A673 (cell line): ENCODE measurements at regions of chr1 and their contacts with region 1.

Region 1: DNA sequence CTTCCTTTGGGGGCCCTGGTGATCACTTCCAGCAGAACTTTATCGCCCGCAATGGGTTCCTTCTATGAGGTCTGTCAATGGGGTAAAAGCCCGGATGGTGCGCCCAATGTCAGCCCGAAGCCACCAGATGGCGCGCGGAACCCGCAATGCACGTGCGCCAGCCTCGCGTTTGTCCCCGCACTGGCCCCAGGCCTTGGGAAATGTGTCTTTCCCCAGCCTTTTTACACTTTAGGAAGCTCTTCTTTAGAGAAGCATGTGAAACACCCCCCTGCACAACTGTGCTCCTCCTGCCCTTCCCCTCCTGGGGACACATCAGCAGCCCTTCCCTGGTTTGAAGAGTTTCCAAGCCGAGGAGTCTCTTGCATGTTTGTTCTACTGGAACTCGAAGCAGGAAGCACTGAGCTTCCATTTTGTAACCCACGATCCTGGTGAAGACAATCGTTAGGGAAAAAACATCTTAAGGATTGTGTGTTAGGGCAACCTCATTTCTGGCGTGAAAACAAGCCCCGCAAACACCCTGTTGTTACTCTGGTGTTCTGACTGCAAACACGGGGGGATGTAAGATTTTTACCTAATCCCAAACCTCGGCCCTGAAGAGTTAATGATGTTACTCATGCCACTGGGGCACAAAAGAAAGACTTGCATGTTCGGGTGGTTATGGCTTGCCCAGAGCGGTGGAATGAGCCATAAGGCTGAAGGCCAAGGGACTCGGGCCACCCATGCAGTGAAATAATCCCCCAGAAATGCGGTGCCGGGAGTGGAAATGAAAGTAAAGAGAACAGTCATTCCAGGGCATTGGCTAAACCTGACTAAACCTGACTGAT is 20.4 kb upstream of the TARBP1 start:
- DNase-seq: peak; percentile 95
- H3K4me3 ChIP-seq: peak overlapping the region; percentile 1
- H3K27ac ChIP-seq: peak overlapping the region; percentile 83
- H3K4me1 ChIP-seq: peaks cover 41% of the 10 kb centered on the region
- H3K27me3 ChIP-seq: no peaks in the 10 kb centered on the region
- CTCF ChIP-seq: peak; percentile 96

Region 2: GRCh38 chr1:234553156-234553863 is 54.0 kb after region 1 on chr1:
- CTCF ChIA-PET with region 1: no interaction called
- POLR2A ChIA-PET with region 1: no interaction called
- intact Hi-C with region 1: no loop called
- DNase-seq: peak; percentile 50
- H3K4me3 ChIP-seq: no peak overlapping the region
- H3K27ac ChIP-seq: no peak overlapping the region
- H3K4me1 ChIP-seq: peaks cover 25% of the 10 kb centered on the region
- H3K27me3 ChIP-seq: no peaks in the 10 kb centered on the region
- CTCF ChIP-seq: no peak

Region 3: GRCh38 chr1:234599617-234600417 is 100.5 kb after region 1 on chr1:
- CTCF ChIA-PET with region 1: no interaction called
- POLR2A ChIA-PET with region 1: no interaction called
- intact Hi-C with region 1: loop called (anchors 2 kb)
- DNase-seq: peak; percentile 76
- H3K4me3 ChIP-seq: peak overlapping the region; percentile 54
- H3K27ac ChIP-seq: peak overlapping the region; percentile 86
- H3K4me1 ChIP-seq: peaks cover 57% of the 10 kb centered on the region
- H3K27me3 ChIP-seq: no peaks in the 10 kb centered on the region
- CTCF ChIP-seq: no peak

Region 4: GRCh38 chr1:234610348-234611152 is 111.2 kb after region 1 on chr1:
- CTCF ChIA-PET with region 1: interaction called, 13 read pairs
- POLR2A ChIA-PET with region 1: interaction called, 5 read pairs
- intact Hi-C with region 1: no loop called
- DNase-seq: peak; percentile 89
- H3K4me3 ChIP-seq: peak overlapping the region; percentile 43
- H3K27ac ChIP-seq: peak overlapping the region; percentile 98
- H3K4me1 ChIP-seq: peaks cover 35% of the 10 kb centered on the region
- H3K27me3 ChIP-seq: no peaks in the 10 kb centered on the region
- CTCF ChIP-seq: no peak

Region 5: GRCh38 chr1:234722904-234723720 is 223.8 kb after region 1 on chr1:
- CTCF ChIA-PET with region 1: no interaction called
- POLR2A ChIA-PET with region 1: no interaction called
- intact Hi-C with region 1: loop called (anchors 10 kb)
- DNase-seq: peak; percentile 44
- H3K4me3 ChIP-seq: peak overlapping the region; percentile 7
- H3K27ac ChIP-seq: peak overlapping the region; percentile 98
- H3K4me1 ChIP-seq: peaks cover 61% of the 10 kb centered on the region
- H3K27me3 ChIP-seq: no peaks in the 10 kb centered on the region
- CTCF ChIP-seq: no peak

Region 6: GRCh38 chr1:235077571-235078479 is 578.5 kb after region 1 on chr1:
- CTCF ChIA-PET with region 1: no interaction called
- POLR2A ChIA-PET with region 1: no interaction called
- intact Hi-C with region 1: loop called (anchors 1 kb)
- DNase-seq: no peak
- H3K4me3 ChIP-seq: no peak overlapping the region
- H3K27ac ChIP-seq: no peak overlapping the region
- H3K4me1 ChIP-seq: no peaks in the 10 kb centered on the region
- H3K27me3 ChIP-seq: no peaks in the 10 kb centered on the region
- CTCF ChIP-seq: no peak

Region 7: DNA sequence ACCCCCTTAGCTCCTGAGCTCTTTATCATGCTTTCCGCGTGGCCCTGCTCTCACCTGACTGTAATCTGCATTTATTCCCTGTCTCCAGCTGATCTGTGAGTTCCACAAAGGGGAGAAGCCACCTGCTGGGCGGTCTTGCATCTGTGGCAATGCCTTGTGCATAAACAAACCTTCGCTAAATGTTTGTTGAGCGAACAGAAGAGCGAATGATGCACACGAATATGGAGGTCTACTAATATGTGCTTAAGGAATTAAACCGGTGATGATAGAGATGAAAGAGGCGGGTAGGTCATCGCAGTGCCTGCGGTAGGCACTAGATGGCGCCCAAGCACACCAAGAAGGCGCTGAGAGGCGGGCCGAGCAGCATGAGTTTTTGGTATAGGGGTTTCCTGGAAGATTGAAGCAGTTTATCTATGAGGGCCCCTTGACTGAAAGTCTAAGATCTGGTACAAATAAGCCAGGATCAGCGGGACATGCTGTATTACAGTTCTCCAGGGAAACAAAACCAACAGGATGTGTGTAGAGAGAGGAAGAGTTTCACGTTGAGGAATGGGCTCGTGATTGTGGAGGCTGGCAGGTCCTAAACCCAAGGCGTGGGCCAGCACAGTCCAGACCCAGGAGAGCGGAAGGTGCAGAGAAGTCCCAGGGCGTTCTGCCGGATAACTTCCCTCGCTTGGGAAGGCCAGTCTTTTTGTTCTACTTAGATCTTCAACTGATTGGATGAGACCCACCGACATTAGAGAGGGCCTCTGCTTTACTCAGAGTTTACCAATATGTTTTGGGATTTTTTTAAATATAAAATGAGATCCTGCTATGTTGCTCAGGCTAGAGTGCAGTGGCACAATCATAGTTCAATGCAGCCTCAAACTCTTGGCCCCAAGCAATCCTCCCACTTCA is 594.6 kb after region 1 on chr1:
- CTCF ChIA-PET with region 1: interaction called, 6 read pairs
- POLR2A ChIA-PET with region 1: no interaction called
- intact Hi-C with region 1: loop called (anchors 1 kb)
- DNase-seq: peak; percentile 77
- H3K4me3 ChIP-seq: no peak overlapping the region
- H3K27ac ChIP-seq: no peak overlapping the region
- H3K4me1 ChIP-seq: no peaks in the 10 kb centered on the region
- H3K27me3 ChIP-seq: no peaks in the 10 kb centered on the region
- CTCF ChIP-seq: peak; percentile 79